ENCODE measurements at regions of chr22 and their contacts with region 1.

Region 1: GRCh38 chr22:19058713-19059451 is 63.3 kb downstream of the DGCR2 start:
- DNase-seq: no peak
- H3K4me3 ChIP-seq: no peak overlapping the region
- H3K27ac ChIP-seq: no peak overlapping the region
- H3K4me1 ChIP-seq: peaks cover 2% of the 10 kb centered on the region
- H3K27me3 ChIP-seq: no peaks in the 10 kb centered on the region
- CTCF ChIP-seq: no peak
- EP300 ChIP-seq: no peak
- POLR2A ChIP-seq: no peak

Region 2: GRCh38 chr22:19109198-19110067 is 50.6 kb after region 1 on chr22:
- intact Hi-C with region 1: loop called in 1 of 4 experiments (anchors 10 kb)
- DNase-seq: peak in 2 of 5 donors; percentile 27 to 55
- H3K4me3 ChIP-seq: no peak overlapping the region
- H3K27ac ChIP-seq: no peak overlapping the region
- H3K4me1 ChIP-seq: peaks cover 19% of the 10 kb centered on the region
- H3K27me3 ChIP-seq: no peaks in the 10 kb centered on the region
- CTCF ChIP-seq: no peak
- EP300 ChIP-seq: no peak
- POLR2A ChIP-seq: no peak